Sigmoid colon (tissue), 7 donors: ENCODE measurements at regions of chr14 and their contacts with region 1.

Region 1: GRCh38 chr14:73058224-73058921 is at the start of gene RBM25:
- DNase-seq: peak; percentile 98
- H3K4me3 ChIP-seq: peak within 1 kb of the TSS; percentile 53 to 94 (median 82)
- H3K27ac ChIP-seq: peak within 1 kb of the TSS; percentile 91 to 98 (median 95)
- H3K4me1 ChIP-seq: peaks cover 0 to 50% (median 42%) of the 10 kb centered on the region in 4 donors
- H3K27me3 ChIP-seq: no peaks in the 10 kb centered on the region
- CTCF ChIP-seq: no peak
- EP300 ChIP-seq: peak in 2 of 4 donors; percentile 3 to 76
- POLR2A ChIP-seq: peak; percentile 98 to 99
- total RNA-seq, gene RBM25: 44.1 to 78.9 (median 57.3) TPM

Region 2: DNA sequence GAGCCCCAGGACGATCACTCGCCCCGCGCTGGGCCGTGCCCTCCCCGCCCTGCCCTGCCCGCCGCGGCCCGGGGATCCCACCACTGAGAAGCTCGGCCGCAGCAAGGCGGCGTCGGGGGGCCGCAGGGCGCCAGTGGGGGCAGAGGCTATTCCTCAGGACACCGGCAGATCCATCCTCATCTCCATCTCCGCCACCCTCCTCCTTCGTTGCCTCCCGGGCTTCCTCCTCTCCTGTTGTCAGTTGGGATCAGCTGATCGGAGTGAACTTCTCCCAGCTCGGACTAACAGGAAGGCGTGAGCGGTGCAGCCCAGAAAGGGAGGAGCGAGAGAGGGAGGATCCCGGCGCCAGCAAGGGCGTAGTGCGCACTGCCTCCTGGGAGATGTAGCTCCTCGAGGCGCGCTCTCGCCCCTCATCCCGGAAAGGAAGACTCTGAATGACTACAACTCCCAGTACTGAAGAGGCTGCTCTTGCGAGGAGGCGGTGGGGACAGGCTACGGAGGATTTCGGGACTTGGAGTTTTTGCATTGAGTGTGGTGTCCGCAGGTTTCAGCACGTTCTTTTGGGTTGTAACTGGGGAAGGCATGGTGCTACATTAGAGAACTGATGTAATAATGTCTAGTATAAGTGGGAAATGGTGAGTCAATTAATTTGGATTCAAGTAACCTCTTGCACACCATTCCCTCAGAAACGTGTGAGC is 31.4 kb before region 1 on chr14 and contains the start of gene ZFYVE1:
- intact Hi-C with region 1: loop called (anchors 1 kb)
- DNase-seq: peak; percentile 98
- H3K4me3 ChIP-seq: peak within 1 kb of the TSS; percentile 69 to 91 (median 82)
- H3K27ac ChIP-seq: peak within 1 kb of the TSS; percentile 89 to 96 (median 94)
- H3K4me1 ChIP-seq: peaks cover 0 to 36% (median 34%) of the 10 kb centered on the region in 4 donors
- H3K27me3 ChIP-seq: no peaks in the 10 kb centered on the region
- CTCF ChIP-seq: no peak
- EP300 ChIP-seq: no peak
- POLR2A ChIP-seq: peak; percentile 64 to 84
- total RNA-seq, gene ZFYVE1: 15.5 to 27.7 (median 21.2) TPM

Region 3: GRCh38 chr14:73452341-73453186 is 394.2 kb after region 1 on chr14:
- intact Hi-C with region 1: no loop called
- DNase-seq: no peak
- H3K4me3 ChIP-seq: no peak overlapping the region
- H3K27ac ChIP-seq: no peak overlapping the region
- H3K4me1 ChIP-seq: peaks cover 0 to 44% (median 29%) of the 10 kb centered on the region in 4 donors
- H3K27me3 ChIP-seq: no peaks in the 10 kb centered on the region
- CTCF ChIP-seq: no peak
- EP300 ChIP-seq: no peak
- POLR2A ChIP-seq: no peak